ENCODE measurements at regions of chr17 and their contacts with region 1.

Region 1: DNA sequence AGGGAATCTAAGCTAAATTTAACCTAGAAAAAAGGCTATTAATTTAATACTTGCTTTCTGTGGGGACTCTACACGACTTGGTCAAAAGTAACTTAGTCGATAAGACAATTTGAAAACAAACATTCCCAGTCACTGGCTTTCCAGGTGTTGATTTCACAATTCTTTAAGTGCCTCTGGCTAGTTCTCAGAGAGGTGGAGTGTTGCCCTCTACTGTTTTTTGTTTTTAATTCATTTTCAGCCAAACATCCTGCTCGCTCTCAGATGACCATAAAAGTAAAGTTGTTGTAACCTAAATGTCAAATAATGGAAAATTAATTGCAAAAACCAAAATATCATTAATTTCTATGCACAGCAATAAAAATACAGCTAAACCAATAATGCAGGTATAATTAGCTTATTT is 107.1 kb downstream of the MYO1D start:
- DNase-seq: no peak
- H3K4me3 Mint-ChIP-seq: no peak overlapping the region
- H3K27ac Mint-ChIP-seq: no peak overlapping the region
- H3K4me1 Mint-ChIP-seq: no peaks in the 10 kb centered on the region
- H3K27me3 Mint-ChIP-seq: no peaks in the 10 kb centered on the region

Region 2: DNA sequence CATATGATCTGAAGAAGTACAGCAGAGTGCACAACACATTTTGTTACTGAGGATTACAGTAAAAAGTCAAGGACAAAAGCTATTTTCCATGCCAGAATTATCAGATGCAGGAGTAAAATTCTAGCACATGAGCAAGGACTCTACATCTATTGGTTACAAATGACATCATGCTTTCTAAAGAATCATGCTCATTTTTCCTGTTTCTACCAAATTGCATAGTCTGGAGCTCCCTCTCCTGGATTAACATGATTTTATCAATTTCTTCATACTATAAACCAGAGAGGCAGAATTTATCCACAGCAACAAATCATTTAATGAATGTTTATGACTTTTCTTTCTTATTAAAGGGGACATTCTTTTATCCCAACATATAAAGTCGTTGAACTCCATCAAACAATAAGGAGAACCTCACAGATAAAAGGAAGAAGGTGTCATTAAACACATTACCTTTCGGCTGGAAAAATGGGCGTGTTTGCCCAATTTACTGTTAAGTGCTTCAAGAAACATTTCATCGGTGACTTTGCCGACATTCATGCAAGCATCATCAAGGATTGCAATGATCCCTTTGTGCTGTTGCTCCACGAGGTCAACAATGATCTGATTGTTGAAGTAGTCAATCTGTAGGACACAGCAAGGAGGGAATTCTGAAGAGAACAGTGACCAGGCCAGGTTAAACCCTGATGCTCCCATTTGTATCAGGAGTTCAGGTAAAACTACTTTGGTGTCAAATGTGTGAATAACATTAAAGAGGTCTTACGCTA is 14.6 kb before region 1 on chr17:
- CTCF ChIA-PET with region 1: interaction called, 11 read pairs
- DNase-seq: no peak
- H3K4me3 Mint-ChIP-seq: no peak overlapping the region
- H3K27ac Mint-ChIP-seq: no peak overlapping the region
- H3K4me1 Mint-ChIP-seq: peaks cover 6% of the 10 kb centered on the region
- H3K27me3 Mint-ChIP-seq: no peaks in the 10 kb centered on the region